ENCODE measurements at regions of chr1 and their contacts with region 1.

Region 1: DNA sequence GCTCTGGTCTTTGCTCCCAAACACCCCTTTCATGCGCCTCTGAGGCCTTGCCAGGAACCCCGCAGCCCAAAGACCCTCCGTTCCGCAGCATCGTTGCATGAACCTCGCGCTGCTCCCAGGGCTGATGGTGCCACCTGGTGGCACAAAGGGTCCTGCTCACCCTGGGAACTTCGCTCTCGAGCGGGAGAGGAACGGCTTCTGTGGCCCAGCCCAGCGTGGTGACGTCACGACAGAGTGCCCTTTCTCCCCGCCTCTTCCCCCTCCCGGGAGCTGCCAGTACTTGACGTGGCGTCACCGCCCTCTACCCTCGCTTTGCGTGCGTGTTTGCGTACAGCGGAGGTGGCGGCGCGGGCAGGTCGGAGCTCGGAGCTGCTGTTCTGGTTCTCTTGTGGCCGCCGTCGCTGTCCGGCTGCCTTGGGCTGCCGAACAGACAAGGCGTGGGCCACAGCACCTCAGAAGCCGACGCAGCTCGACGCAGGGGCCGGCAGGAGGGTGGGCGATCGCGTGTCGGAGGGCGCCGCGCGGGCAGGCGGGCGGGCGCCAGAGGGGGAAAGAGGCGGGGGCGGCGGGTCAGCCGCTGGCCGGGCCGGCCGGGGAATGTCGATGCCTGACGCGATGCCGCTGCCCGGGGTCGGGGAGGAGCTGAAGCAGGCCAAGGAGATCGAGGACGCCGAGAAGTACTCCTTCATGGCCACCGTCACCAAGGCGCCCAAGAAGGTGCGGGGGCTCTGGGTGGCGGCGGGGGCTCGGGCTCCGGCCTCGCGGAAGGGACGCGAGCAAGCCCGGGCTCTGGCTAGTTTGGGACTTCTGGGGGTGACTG is at the start of gene AHCYL1:
- DNase-seq: peak; percentile 94
- ATAC-seq: peak; percentile 97
- H3K4me3 ChIP-seq: peak within 1 kb of the TSS; percentile 78 to 82
- H3K27ac ChIP-seq: peak within 1 kb of the TSS; percentile 66
- H3K4me1 ChIP-seq: peaks cover 6 to 30% of the 10 kb centered on the region in 2 experiments; a peak in 3 of 4 replicates
- H3K27me3 ChIP-seq: no peaks in the 10 kb centered on the region
- CTCF ChIP-seq: peak; percentile 92 to 96 (median 94)
- POLR2A ChIP-seq: peak; percentile 70
- RAD21 ChIP-seq: peak; percentile 99
- total RNA-seq, gene AHCYL1: 92.0 TPM

Region 2: GRCh38 chr1:109548321-109549267 is 436.1 kb before region 1 on chr1 and contains the start of gene GNAI3:
- CTCF ChIA-PET with region 1: interaction called, 14 read pairs
- POLR2A ChIA-PET with region 1: interaction called, 8 read pairs
- RAD21 ChIA-PET with region 1: interaction called in 1 of 2 experiments, 4 read pairs
- intact Hi-C with region 1: loop called (anchors 1 kb)
- DNase-seq: peak; percentile 92
- ATAC-seq: peak; percentile 91
- H3K4me3 ChIP-seq: peak within 1 kb of the TSS; percentile 86 to 98
- H3K27ac ChIP-seq: peak within 1 kb of the TSS; percentile 70
- H3K4me1 ChIP-seq: peaks cover 15 to 24% of the 10 kb centered on the region in 2 experiments
- H3K27me3 ChIP-seq: no peaks in the 10 kb centered on the region
- CTCF ChIP-seq: no peak
- POLR2A ChIP-seq: peak; percentile 95
- RAD21 ChIP-seq: no peak
- total RNA-seq, gene GNAI3: 9.5 TPM

Region 3: DNA sequence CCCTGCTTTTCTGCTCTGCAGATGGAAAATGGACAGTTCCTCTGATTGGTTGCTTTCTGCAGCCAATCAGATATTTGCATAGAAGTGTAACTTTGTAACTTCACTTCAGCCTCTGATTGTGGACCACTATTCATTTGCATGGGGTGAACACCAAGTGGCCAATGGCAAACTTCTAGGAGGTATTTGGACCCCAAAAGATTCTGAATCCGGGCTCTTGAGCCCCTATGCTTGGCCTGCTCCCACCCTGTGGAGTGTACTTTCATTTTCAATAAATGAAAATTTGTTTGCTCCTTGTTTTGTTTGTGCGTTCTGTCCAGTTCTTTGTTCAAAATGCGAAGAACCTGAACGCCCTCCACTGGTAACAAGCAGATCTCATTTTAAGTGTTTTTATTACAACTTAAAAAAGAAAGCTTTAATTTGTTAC is 335.2 kb before region 1 on chr1:
- CTCF ChIA-PET with region 1: interaction called, 14 read pairs
- POLR2A ChIA-PET with region 1: no interaction called
- RAD21 ChIA-PET with region 1: interaction called in 1 of 2 experiments, 3 read pairs
- intact Hi-C with region 1: no loop called
- DNase-seq: peak; percentile 18
- ATAC-seq: peak; percentile 82
- H3K4me3 ChIP-seq: peak overlapping the region; percentile 8 to 42; a peak in 2 of 4 replicates
- H3K27ac ChIP-seq: no peak overlapping the region
- H3K4me1 ChIP-seq: peaks cover 0 to 3% of the 10 kb centered on the region in 2 experiments; a peak in 1 of 4 replicates
- H3K27me3 ChIP-seq: peaks cover 10% of the 10 kb centered on the region; the same call in 1 of the 2 replicates
- CTCF ChIP-seq: peak; percentile 33 to 45 (median 39); a peak in 4 of 6 replicates
- POLR2A ChIP-seq: no peak
- RAD21 ChIP-seq: peak; percentile 59

Region 4: GRCh38 chr1:109773146-109773899 is 211.3 kb before region 1 on chr1:
- CTCF ChIA-PET with region 1: interaction called, 396 read pairs
- POLR2A ChIA-PET with region 1: interaction called, 18 read pairs
- RAD21 ChIA-PET with region 1: interaction called, 34 to 56 read pairs
- intact Hi-C with region 1: loop called (anchors 1 kb)
- DNase-seq: peak; percentile 70
- ATAC-seq: peak; percentile 92
- H3K4me3 ChIP-seq: no peak overlapping the region
- H3K27ac ChIP-seq: no peak overlapping the region
- H3K4me1 ChIP-seq: peaks cover 0 to 18% of the 10 kb centered on the region in 2 experiments; a peak in 2 of 4 replicates
- H3K27me3 ChIP-seq: no peaks in the 10 kb centered on the region
- CTCF ChIP-seq: peak; percentile 85 to 97 (median 92)
- POLR2A ChIP-seq: no peak
- RAD21 ChIP-seq: peak; percentile 99

Region 5: GRCh38 chr1:109923131-109923945 is 61.3 kb before region 1 on chr1:
- CTCF ChIA-PET with region 1: interaction called, 15 read pairs
- POLR2A ChIA-PET with region 1: no interaction called
- RAD21 ChIA-PET with region 1: interaction called in 1 of 2 experiments, 5 read pairs
- intact Hi-C with region 1: loop called (anchors 5 kb)
- DNase-seq: no peak
- ATAC-seq: peak; percentile 93
- H3K4me3 ChIP-seq: no peak overlapping the region
- H3K27ac ChIP-seq: no peak overlapping the region; the same call in 1 of the 2 replicates
- H3K4me1 ChIP-seq: no peaks in the 10 kb centered on the region
- H3K27me3 ChIP-seq: no peaks in the 10 kb centered on the region
- CTCF ChIP-seq: peak; percentile 24 to 69 (median 64); a peak in 5 of 6 replicates
- POLR2A ChIP-seq: no peak
- RAD21 ChIP-seq: peak; percentile 24; the same call in 1 of the 2 replicates

Region 6: GRCh38 chr1:109959974-109960744 is 24.5 kb before region 1 on chr1:
- CTCF ChIA-PET with region 1: interaction called, 12 read pairs
- POLR2A ChIA-PET with region 1: no interaction called
- RAD21 ChIA-PET with region 1: no interaction called
- intact Hi-C with region 1: no loop called
- DNase-seq: no peak
- ATAC-seq: peak; percentile 75
- H3K4me3 ChIP-seq: no peak overlapping the region
- H3K27ac ChIP-seq: no peak overlapping the region
- H3K4me1 ChIP-seq: peaks cover 7 to 12% of the 10 kb centered on the region in 2 experiments; a peak in 3 of 4 replicates
- H3K27me3 ChIP-seq: no peaks in the 10 kb centered on the region
- CTCF ChIP-seq: no peak; a peak in 1 of 6 replicates
- POLR2A ChIP-seq: no peak
- RAD21 ChIP-seq: no peak

Region 7: DNA sequence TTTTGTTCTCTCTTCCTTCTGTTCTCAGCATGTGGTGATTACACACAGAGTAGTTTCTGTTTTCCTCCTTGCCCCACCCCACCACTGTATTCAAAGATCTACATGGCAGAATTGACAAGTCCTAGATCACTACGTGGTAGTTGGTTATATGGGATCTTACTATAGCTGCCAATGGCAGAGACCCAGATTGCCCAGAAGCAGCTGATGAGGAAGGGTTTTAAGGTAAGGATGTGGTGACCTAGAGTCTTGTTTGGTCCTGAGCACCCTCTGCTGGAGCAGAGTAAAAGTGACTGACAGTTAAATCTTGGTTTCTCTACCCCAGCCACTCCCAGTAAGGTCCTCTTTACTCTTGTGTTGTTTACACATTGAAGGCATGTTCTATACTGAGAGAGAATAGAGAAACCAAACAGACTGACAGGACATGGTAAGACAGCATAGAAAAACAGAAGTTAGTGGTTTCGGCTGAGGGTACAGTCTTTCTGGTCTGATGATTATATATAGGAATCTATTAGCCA is 26.9 kb after region 1 on chr1:
- CTCF ChIA-PET with region 1: interaction called, 11 read pairs
- POLR2A ChIA-PET with region 1: interaction called, 5 read pairs
- RAD21 ChIA-PET with region 1: interaction called, 4 to 5 read pairs
- intact Hi-C with region 1: loop called (anchors 1 kb)
- DNase-seq: peak; percentile 39
- ATAC-seq: peak; percentile 98
- H3K4me3 ChIP-seq: no peak overlapping the region
- H3K27ac ChIP-seq: no peak overlapping the region
- H3K4me1 ChIP-seq: no peaks in the 10 kb centered on the region
- H3K27me3 ChIP-seq: no peaks in the 10 kb centered on the region
- CTCF ChIP-seq: peak; percentile 31 to 66 (median 55); a peak in 5 of 6 replicates
- POLR2A ChIP-seq: no peak
- RAD21 ChIP-seq: peak; percentile 69

Measured in HCT116 (cell line).